B cell (primary cell): ENCODE measurements at regions of chr6 and their contacts with region 1.

Region 1: DNA sequence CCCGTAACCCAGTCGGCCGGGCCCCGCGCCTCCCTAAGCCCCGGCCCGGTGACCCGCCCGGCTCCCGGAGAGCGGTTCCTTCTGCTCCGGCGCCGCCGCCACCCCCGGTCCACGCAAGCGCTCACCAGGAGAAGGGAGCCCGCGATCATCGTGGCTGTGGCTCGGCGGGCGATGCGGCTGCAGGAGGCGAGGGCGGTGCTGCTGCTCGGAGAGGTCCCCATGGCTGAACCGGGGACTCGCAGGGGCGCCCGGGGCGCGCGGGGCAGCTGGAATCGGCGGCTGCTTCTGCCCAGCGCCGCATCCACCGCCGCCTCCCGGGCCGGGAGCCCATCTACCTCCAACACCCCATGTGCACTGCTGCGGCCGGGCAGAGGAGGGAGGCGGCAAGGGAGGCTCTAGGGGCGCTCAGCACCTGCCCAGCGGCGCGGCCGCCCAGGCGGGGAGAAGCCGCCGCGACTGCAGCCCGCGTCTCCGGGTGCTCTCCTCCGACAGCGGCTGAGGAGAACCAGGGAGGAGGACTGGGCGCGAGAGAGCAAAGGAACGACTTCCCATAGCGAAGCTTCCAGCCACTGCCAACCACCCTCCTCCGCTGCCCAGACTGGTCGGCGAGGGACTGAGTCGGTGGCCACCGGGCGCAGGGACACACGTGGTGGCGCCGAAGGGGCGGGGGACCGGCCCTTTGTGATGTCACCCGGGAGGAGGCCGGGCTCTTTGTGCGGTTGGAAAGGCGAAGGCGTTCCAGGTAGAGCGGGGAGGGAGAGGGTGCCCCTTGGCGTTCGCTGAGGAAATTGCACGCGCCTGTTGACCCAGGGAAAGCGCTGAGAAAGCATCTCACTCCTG is at the start of gene TNFRSF21:
- DNase-seq: peak; percentile 85
- ATAC-seq: peak; percentile 96
- H3K4me3 ChIP-seq: peak within 1 kb of the TSS; percentile 50 to 68 (median 59)
- H3K4me3 Mint-ChIP-seq: peak within 1 kb of the TSS; percentile 87
- H3K27ac ChIP-seq: no peak within 1 kb of the TSS
- H3K27ac Mint-ChIP-seq: no peak within 1 kb of the TSS
- H3K4me1 ChIP-seq: peaks cover 12 to 14% of the 10 kb centered on the region in 2 donors
- H3K4me1 Mint-ChIP-seq: peaks cover 12% of the 10 kb centered on the region
- H3K27me3 ChIP-seq: peaks cover 0 to 17% (median 7%) of the 10 kb centered on the region in 4 experiments
- H3K27me3 Mint-ChIP-seq: peaks cover 36% of the 10 kb centered on the region
- CTCF ChIP-seq: peak; percentile 86
- total RNA-seq, gene TNFRSF21: 1.2 and 1.6 TPM in 2 replicates

Region 2: DNA sequence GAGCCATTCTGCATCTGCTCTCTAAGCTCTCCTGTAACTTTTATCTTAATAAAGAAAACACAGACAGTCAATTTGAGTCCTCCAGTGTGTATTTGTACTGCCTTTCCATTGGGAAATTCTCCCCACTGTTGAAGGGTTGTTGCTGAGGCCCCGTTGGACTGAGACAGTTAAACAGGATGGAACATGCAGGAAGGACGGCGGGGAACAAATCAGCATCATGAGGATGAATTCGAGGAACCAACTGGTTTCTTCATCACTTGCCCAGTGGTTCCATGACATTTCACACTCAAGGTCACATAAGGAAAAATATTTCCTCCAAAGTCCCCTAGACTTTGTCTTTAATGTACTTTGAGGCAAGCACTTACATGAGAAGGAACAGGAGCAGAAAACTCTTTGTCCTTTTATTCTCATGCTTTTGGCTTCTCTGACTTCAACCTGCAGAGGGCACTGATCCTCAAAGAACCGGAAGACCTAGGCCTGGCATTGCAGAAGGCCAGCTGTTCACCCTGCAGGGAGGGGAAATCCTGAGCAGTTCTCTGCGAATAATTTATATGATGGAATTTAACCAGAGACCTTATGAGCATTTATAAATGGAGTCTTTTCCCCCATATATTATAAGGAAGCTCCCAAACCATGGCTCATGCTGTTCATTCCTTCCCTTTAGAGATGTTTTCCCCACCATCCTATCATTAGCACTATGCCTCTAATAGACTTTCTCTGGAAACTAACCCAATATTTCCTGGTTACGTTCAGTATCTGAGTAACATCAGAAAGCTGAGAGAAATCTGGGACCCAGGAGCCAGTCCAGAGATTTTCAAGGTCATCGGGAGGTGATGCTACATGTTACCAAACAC is 212.2 kb before region 1 on chr6:
- CTCF ChIA-PET with region 1: interaction called, 31 read pairs
- POLR2A ChIA-PET with region 1: no interaction called
- intact Hi-C with region 1: no loop called
- DNase-seq: peak; percentile 52
- ATAC-seq: peak; percentile 60
- H3K4me3 ChIP-seq: no peak overlapping the region
- H3K4me3 Mint-ChIP-seq: no peak overlapping the region
- H3K27ac ChIP-seq: no peak overlapping the region
- H3K27ac Mint-ChIP-seq: no peak overlapping the region
- H3K4me1 ChIP-seq: no peaks in the 10 kb centered on the region
- H3K4me1 Mint-ChIP-seq: no peaks in the 10 kb centered on the region
- H3K27me3 ChIP-seq: no peaks in the 10 kb centered on the region
- H3K27me3 Mint-ChIP-seq: peaks cover 8% of the 10 kb centered on the region
- CTCF ChIP-seq: peak; percentile 45

Region 3: GRCh38 chr6:47242483-47243386 is 66.8 kb before region 1 on chr6:
- CTCF ChIA-PET with region 1: interaction called, 8 read pairs
- POLR2A ChIA-PET with region 1: interaction called, 3 read pairs
- intact Hi-C with region 1: loop called (anchors 5 kb)
- DNase-seq: peak; percentile 83
- ATAC-seq: peak; percentile 98
- H3K4me3 ChIP-seq: no peak overlapping the region
- H3K4me3 Mint-ChIP-seq: peak overlapping the region; percentile 57
- H3K27ac ChIP-seq: peak overlapping the region in 1 of 2 donors; percentile 40
- H3K27ac Mint-ChIP-seq: peak overlapping the region; percentile 62
- H3K4me1 ChIP-seq: peaks cover 30 to 34% of the 10 kb centered on the region in 2 donors
- H3K4me1 Mint-ChIP-seq: peaks cover 35% of the 10 kb centered on the region
- H3K27me3 ChIP-seq: no peaks in the 10 kb centered on the region
- H3K27me3 Mint-ChIP-seq: no peaks in the 10 kb centered on the region
- CTCF ChIP-seq: no peak

Region 4: DNA sequence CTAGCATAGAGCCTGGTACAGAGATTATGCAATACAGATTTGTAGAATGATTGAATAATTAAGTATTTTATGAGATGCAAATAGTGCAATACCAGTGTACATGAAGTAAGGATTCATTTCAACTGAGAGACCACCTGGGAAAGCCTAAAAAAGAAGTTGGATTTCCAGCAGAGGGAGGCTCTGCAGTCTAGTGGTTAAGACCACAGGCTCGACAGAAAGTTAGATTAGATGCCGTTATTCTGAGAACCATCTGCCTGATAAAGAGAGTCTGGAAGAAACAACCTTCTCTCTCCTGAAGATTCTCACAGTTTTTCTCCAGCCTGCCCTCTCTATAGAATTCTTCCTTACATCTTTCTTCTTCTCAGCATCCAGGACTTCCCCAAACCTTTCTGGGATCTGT is 13.8 kb after region 1 on chr6:
- CTCF ChIA-PET with region 1: no interaction called
- POLR2A ChIA-PET with region 1: no interaction called
- intact Hi-C with region 1: no loop called
- DNase-seq: no peak
- ATAC-seq: no peak
- H3K4me3 ChIP-seq: no peak overlapping the region
- H3K4me3 Mint-ChIP-seq: no peak overlapping the region
- H3K27ac ChIP-seq: no peak overlapping the region
- H3K27ac Mint-ChIP-seq: no peak overlapping the region
- H3K4me1 ChIP-seq: no peaks in the 10 kb centered on the region
- H3K4me1 Mint-ChIP-seq: no peaks in the 10 kb centered on the region
- H3K27me3 ChIP-seq: peaks cover 0 to 2% (median 0%) of the 10 kb centered on the region in 4 experiments
- H3K27me3 Mint-ChIP-seq: peaks cover 27% of the 10 kb centered on the region
- CTCF ChIP-seq: no peak